AG04449 (cell line): ENCODE measurements at regions of chr11 and their contacts with region 1.

Region 1: DNA sequence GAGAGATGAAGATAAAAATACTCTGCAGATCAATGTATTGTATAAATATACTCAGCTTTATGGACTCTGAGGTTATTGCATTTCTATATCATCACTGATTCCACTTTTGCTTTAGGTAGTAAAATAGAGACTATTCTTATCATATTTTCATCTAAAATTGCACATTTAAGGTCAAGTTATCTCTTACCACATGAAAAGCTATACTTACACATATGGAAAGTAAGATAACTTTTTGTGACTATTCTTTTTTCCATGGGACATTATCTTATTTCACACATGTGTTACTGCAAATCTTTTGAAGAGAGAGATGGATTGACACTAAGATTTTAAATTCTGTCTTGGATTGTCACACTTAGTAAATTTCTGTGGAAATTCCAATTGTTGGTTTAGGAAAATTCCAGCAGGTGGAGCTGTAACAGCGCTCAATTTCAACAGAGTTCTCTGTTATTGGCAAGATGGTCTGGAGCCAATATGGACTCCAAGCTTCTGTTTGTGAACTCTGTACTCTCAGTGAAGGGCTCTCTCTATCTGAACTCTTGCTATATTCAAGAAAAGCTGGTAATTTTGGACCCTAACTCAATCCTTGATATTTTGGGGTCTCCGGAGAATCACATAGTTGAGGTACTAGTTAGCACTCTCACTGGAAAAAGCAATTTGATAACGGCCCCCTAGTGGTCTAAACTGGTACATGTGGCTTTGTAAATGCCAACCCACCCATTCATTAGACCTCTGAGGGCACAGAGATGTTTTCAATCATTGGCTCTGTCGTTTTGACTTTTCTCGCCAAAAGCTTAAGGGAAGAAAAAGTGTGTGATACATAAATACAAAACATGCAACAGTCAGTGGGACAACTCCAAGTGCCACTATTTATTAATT is 429.7 kb downstream of the ETS1 start:
- DNase-seq: no peak
- H3K4me3 ChIP-seq: peak overlapping the region; percentile 41
- CTCF ChIP-seq: peak; percentile 75

Region 2: GRCh38 chr11:127843483-127844396 is 313.9 kb before region 1 on chr11:
- CTCF ChIA-PET with region 1: interaction called, 12 read pairs
- POLR2A ChIA-PET with region 1: no interaction called
- DNase-seq: peak; percentile 16
- H3K4me3 ChIP-seq: no peak overlapping the region
- CTCF ChIP-seq: peak; percentile 75

Region 3: DNA sequence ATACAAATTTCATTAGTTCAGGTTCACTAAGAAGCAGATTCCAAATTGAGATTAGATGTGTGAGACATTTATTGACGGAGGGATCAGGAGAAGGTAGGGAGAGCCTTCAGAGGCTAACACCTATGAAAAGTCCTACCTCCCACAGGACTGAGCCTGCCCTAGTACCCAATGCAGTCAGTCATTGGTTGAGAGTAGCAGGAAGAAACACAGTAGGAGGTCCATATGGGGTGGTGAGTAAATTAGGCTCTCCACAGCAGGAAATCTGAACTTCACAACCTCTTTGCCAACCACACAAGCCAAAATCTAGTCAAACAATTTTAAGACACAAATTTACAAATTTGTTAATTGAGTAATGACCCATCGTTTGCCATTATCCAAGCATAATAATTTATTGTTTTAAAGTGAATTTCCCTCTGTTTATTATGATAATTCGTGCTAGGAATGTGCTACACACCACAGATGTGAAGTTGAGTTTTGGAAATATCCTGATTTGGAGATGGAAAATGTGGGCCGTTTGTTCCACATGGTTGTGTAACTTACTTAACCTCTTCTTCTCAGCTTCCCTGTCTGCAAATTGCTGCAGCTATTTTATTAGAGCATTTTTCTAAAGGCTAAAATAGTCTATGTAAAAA is 112.5 kb before region 1 on chr11:
- CTCF ChIA-PET with region 1: interaction called, 90 read pairs
- POLR2A ChIA-PET with region 1: no interaction called
- DNase-seq: no peak
- H3K4me3 ChIP-seq: no peak overlapping the region
- CTCF ChIP-seq: no peak

Region 4: DNA sequence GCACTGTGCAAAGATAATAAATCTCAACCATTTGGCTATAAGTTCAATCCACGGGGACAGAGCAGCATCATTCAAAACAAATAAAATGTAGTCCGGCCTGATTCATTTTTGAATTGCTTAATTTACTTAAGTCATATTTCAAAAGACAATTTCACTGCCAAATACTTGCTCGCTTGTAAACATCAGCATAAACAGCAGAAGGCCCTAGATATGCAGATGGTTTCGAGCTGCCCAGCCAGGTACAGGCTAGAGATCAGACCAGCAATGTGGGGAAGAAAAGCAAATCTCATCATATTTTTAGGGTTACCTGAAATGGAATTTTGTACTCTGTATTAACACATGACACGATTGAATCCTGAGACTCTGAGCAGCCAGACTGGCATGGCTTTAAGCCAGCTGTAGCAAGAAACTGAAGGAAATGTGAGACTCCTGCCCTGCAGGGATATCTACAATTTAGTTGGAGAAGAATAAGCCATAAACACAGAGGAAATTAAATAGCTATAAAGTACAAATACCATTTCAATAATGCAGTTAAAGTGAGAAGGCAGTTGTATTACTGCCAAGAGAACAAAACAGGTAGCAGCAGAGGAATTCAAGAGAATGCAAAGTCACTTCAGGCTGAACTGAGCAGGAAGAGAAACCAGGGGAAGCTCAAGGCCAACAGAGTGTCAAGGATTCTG is 10.6 kb before region 1 on chr11:
- CTCF ChIA-PET with region 1: interaction called, 72 read pairs
- POLR2A ChIA-PET with region 1: no interaction called
- DNase-seq: no peak
- H3K4me3 ChIP-seq: no peak overlapping the region
- CTCF ChIP-seq: no peak

Region 5: DNA sequence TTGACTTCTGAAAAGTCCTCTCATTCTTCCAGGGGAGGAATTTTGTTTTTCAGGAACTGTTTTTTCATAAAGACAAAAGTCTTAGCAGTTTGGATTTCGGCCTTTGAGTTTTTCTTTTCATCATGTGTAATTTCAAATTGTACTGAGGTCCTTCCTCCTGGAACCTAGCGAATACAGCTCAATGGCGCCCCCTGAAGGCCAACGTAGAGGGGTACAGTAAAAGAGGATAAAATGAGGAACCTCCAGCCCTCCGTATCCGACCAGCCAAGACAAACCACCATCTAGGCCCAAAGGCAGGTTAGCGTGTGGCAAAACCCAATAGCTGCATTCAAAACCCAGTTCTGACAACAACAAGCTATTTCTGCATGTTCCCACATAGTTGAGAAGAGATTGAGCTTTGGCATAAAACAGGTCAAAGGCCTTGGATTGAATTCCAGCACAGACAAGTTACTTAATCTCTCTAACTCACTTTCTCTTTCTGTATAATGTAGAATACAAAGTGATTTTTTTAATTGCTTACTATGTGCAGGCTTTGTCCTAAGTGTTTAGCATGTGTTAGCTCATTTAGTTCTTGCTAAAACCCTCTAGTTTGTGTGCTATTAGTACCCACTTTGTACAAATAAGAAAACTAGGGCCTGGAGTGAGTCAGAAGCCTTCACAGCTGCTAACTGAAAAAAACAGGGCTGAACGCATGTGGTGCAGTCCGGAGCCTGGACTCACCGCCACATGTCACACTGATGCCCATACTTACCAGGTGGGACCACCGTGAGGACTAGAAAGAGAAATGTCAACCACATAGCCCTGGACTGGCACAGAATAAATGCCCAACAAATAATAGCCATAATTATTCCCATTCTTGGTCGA is 472.9 kb after region 1 on chr11:
- CTCF ChIA-PET with region 1: interaction called, 490 read pairs
- POLR2A ChIA-PET with region 1: no interaction called
- DNase-seq: peak; percentile 31
- H3K4me3 ChIP-seq: no peak overlapping the region
- CTCF ChIP-seq: peak; percentile 66

Region 6: GRCh38 chr11:128841461-128842072 is 683.9 kb after region 1 on chr11:
- CTCF ChIA-PET with region 1: interaction called, 10 read pairs
- POLR2A ChIA-PET with region 1: no interaction called
- DNase-seq: no peak
- H3K4me3 ChIP-seq: no peak overlapping the region
- CTCF ChIP-seq: no peak

Region 7: GRCh38 chr11:128956401-128957201 is 798.9 kb after region 1 on chr11:
- CTCF ChIA-PET with region 1: interaction called, 39 read pairs
- POLR2A ChIA-PET with region 1: no interaction called
- DNase-seq: peak; percentile 26
- H3K4me3 ChIP-seq: no peak overlapping the region
- CTCF ChIP-seq: peak; percentile 57